ENCODE measurements at regions of chr19 and their contacts with region 1.

Region 1: GRCh38 chr19:47057328-47057727 is 8.9 kb upstream of the TMEM160 start:
- DNase-seq: no peak
- H3K4me3 ChIP-seq: no peak overlapping the region
- H3K4me3 Mint-ChIP-seq: peak overlapping the region; percentile 64
- H3K27ac Mint-ChIP-seq: peak overlapping the region; percentile 95
- H3K4me1 ChIP-seq: peaks cover 55% of the 10 kb centered on the region
- H3K4me1 Mint-ChIP-seq: peaks cover 63% of the 10 kb centered on the region
- H3K27me3 ChIP-seq: no peaks in the 10 kb centered on the region
- H3K27me3 Mint-ChIP-seq: no peaks in the 10 kb centered on the region
- CTCF ChIP-seq: no peak

Region 2: DNA sequence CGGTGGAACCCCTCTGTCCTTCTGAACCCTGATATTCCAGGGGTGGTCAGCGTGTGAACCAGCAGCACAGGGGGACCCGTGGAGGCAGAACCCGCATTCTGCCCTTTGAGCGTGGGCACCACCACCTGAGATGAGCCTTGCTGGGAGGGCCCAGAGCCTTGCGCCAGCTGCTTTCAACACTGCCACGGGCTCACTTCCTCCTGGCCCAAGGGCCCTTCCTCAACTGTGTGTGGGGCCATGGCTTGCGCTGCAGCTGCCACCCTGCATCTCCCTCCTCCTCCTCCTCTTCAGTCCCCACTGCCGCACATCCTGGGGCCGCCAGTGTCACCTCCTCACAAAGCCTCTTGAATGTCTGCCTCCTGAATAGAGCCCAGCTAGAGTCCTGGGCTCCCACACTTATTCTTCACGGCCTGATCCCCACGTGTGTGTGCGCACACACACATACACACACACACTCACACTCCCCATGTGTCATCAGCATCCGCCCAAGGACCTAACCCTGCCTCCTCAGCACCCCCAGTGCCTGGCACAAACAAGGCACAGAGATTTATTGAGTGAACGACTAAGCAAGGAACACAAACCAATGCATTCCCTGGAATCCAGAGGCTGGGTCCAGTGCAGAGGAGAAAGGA is 18.0 kb after region 1 on chr19:
- CTCF ChIA-PET with region 1: interaction called, 15 read pairs
- POLR2A ChIA-PET with region 1: interaction called, 10 read pairs
- intact Hi-C with region 1: no loop called
- DNase-seq: no peak
- H3K4me3 ChIP-seq: no peak overlapping the region
- H3K4me3 Mint-ChIP-seq: no peak overlapping the region
- H3K27ac Mint-ChIP-seq: no peak overlapping the region
- H3K4me1 ChIP-seq: peaks cover 10% of the 10 kb centered on the region
- H3K4me1 Mint-ChIP-seq: peaks cover 3% of the 10 kb centered on the region
- H3K27me3 ChIP-seq: no peaks in the 10 kb centered on the region
- H3K27me3 Mint-ChIP-seq: no peaks in the 10 kb centered on the region
- CTCF ChIP-seq: no peak

Region 3: DNA sequence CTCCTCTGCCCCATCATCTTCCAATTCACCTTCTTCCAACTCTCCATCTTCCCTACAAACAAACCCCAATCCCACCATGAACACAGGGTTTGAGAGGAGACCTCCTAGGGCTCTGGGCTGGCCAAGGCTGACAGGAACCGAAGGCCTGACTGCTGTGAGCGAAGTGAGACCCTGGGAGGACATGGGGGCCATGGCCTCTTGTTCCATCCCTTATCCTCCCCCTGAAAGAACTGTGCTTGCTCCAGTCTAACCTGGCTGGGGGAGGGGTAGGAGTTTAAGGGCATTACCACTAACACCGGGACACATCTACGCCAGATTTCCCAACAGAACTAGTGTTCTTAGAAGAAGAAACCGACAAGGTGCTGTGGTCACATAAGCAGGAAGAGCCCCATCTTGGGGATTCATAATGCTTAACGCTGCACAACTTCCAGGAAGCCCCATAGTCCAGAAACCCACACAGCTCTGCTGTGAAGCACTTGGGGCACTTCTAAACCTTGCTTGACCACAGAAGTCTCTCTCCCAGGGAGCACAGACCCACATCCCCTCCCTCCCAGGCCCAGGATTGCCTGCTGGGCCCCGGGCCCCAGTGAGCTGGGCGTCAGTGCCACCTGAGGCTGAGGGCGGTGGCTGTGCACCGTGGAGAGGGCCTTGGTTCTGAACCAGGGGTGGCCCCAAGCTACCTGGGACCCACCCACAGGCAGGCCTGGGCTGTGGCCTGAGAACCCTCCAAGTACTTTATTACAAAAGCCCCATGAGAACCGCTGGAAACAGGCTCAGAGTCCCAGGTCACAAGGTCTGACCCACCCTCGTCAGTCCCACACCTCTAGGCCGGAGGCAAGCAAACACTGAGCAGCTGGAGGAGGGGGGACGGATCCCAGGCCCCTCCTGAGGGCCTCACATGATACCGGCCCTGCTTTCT is 37.5 kb after region 1 on chr19:
- CTCF ChIA-PET with region 1: no interaction called
- POLR2A ChIA-PET with region 1: interaction called, 9 read pairs
- intact Hi-C with region 1: loop called (anchors 1 kb)
- DNase-seq: peak; percentile 75 to 88
- H3K4me3 ChIP-seq: no peak overlapping the region
- H3K4me3 Mint-ChIP-seq: peak overlapping the region; percentile 41
- H3K27ac Mint-ChIP-seq: peak overlapping the region; percentile 100
- H3K4me1 ChIP-seq: peaks cover 64% of the 10 kb centered on the region
- H3K4me1 Mint-ChIP-seq: peaks cover 50% of the 10 kb centered on the region
- H3K27me3 ChIP-seq: no peaks in the 10 kb centered on the region
- H3K27me3 Mint-ChIP-seq: no peaks in the 10 kb centered on the region
- CTCF ChIP-seq: no peak